ENCODE measurements at regions of chr20 and their contacts with region 1.

Region 1: DNA sequence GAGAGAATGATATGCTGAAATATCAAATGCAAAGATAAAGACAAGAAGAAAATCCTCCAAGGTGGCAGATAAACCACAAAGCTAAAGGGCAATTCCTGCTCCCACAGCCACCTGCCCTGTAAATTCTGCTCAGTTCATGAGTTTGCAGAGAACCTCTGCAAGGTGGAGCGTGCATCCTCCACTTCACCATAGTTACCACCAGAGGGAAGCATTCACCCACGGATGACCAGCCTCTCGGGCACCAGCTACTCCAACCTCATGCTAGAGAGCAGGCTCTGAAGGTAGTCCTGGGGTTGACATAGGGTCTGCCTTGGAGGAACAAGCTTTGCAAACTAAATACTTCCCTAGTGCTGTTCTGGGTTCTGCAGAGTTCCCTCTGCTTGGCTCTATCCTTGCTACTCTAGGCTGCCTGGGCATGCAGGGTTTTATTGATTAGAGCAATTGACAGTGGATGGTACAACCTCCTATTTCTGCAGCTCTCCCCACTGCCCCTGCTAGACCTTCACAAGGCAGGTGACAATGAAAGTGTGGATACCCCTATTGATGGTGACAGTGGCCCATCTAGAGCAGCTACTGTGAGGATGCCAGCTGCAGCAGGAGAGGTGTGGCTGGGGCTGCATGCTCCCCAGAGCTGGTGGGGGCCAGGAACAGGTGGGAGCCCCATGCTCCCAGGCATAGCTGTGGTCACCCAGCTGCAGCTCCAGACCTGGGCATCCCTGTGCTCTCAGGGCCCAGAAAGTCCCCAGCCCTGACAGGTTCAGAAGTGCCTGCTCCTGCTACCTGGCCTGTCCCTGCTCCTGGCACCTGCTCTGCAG is 51.1 kb downstream of the GGTLC1 start:
- DNase-seq: peak; percentile 11 to 20
- ATAC-seq: peak; percentile 27 to 69
- H3K4me3 ChIP-seq: no peak overlapping the region
- H3K27ac ChIP-seq: no peak overlapping the region
- H3K4me1 ChIP-seq: no peaks in the 10 kb centered on the region
- H3K27me3 ChIP-seq: no peaks in the 10 kb centered on the region
- CTCF ChIP-seq: peak; percentile 15 to 60 (median 55)
- POLR2A ChIP-seq: no peak

Region 2: DNA sequence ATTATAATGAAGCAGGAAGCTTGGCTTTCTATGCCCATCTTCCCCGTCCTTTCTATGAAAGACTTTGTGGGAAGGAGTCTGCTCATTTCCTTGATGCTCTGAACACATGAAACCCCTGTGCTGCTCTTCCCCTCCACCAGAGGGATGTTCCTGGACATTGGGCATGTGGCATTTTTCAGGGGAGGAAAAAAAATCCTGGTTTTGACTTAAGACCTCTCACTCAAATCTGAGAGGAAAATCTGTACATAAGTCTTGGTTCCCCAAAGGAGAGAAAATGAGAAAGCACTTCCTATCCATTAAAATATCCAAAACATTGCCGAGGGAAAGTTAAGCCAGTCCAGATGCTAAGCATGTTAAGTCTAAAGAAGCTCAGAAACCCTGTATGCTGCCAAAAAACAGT is 1839.0 kb before region 1 on chr20:
- in situ Hi-C with region 1: no loop called
- intact Hi-C with region 1: no loop called
- DNase-seq: no peak
- ATAC-seq: no peak
- H3K4me3 ChIP-seq: no peak overlapping the region
- H3K27ac ChIP-seq: no peak overlapping the region
- H3K4me1 ChIP-seq: no peaks in the 10 kb centered on the region
- H3K27me3 ChIP-seq: no peaks in the 10 kb centered on the region
- CTCF ChIP-seq: no peak
- POLR2A ChIP-seq: no peak

Region 3: DNA sequence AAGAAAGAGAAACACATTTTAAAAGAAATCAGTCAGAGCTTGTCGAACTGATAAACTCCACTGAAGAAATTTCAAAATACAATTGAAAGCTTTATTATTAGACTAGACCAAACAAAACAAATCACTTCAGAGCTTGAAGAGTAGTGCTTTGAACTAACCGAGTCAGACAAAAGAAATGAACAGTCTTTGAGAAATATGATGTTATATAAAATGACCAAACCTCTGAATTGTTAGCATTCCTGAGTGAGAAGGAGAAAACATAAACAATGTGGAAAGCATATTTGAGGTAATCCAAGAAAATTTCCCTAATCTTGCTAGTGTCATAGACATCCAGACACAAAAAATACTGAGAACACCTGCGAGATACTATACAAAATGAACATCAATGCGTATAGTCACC is 235.5 kb before region 1 on chr20:
- in situ Hi-C with region 1: no loop called
- intact Hi-C with region 1: no loop called
- DNase-seq: no peak
- ATAC-seq: no peak
- H3K4me3 ChIP-seq: no peak overlapping the region
- H3K27ac ChIP-seq: no peak overlapping the region
- H3K4me1 ChIP-seq: no peaks in the 10 kb centered on the region
- H3K27me3 ChIP-seq: no peaks in the 10 kb centered on the region
- CTCF ChIP-seq: no peak
- POLR2A ChIP-seq: no peak

Region 4: GRCh38 chr20:24098886-24099285 is 161.4 kb after region 1 on chr20:
- in situ Hi-C with region 1: loop called in 1 of 4 experiments (anchors 10 kb)
- intact Hi-C with region 1: no loop called
- DNase-seq: no peak
- ATAC-seq: peak in 1 of 2 donors; percentile 45
- H3K4me3 ChIP-seq: no peak overlapping the region
- H3K27ac ChIP-seq: no peak overlapping the region
- H3K4me1 ChIP-seq: no peaks in the 10 kb centered on the region
- H3K27me3 ChIP-seq: no peaks in the 10 kb centered on the region
- CTCF ChIP-seq: no peak
- POLR2A ChIP-seq: no peak

Measured in gastrocnemius medialis (tissue), 4 donors.